Activated CD4-positive, alpha-beta T cell treated with anti-CD3 and anti-CD28 coated beads for 36 hours (primary cell): ENCODE measurements at regions of chr12 and their contacts with region 1.

Region 1: DNA sequence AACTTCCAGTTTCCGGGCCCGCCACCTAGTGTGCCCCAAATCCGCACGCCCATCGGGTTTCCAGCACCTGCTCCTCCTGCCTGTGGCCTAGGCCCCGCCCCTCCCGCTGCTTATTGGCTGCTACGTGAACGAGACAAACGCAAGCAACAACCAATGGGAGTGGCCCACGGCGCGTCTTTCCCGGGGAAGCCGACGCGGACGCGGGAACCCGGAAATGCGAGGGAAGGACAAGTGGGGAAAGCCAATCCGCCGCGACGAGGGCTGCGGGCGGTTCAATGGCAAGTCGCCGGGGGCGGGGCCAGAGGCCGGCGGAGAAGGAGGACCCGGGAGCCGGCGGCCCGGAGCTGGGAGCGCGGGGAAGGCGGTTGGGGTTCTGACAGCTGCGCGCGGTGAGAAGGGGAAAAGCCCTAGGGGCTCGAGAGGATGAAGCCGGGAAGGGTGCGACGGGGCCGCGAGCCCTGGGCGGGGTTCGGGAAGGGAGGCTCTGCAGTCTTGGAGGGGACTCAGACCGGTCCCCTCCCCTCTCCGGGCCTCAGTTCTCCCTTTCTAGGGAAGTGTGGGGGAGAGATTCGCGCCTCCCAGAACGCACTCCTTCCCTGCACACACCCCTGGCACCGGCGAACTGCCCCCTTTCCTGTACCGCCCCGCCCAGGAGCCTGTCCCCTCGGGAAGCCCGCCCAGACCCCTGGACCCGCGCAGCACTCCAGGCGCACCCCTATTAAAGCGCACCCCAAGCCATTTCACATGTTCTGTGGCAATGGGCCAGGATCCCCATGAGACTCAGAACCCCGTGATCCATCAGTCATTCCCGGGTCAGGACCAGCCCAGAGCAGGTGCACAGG is at the start of gene FICD:
- DNase-seq: peak; percentile 100
- ATAC-seq: peak; percentile 93
- H3K4me3 Mint-ChIP-seq: peak within 1 kb of the TSS; percentile 82
- H3K27ac Mint-ChIP-seq: peak within 1 kb of the TSS; percentile 83
- H3K4me1 Mint-ChIP-seq: peaks cover 26% of the 10 kb centered on the region
- H3K27me3 Mint-ChIP-seq: no peaks in the 10 kb centered on the region
- total RNA-seq, gene FICD: 3.5 to 4.5 TPM

Region 2: DNA sequence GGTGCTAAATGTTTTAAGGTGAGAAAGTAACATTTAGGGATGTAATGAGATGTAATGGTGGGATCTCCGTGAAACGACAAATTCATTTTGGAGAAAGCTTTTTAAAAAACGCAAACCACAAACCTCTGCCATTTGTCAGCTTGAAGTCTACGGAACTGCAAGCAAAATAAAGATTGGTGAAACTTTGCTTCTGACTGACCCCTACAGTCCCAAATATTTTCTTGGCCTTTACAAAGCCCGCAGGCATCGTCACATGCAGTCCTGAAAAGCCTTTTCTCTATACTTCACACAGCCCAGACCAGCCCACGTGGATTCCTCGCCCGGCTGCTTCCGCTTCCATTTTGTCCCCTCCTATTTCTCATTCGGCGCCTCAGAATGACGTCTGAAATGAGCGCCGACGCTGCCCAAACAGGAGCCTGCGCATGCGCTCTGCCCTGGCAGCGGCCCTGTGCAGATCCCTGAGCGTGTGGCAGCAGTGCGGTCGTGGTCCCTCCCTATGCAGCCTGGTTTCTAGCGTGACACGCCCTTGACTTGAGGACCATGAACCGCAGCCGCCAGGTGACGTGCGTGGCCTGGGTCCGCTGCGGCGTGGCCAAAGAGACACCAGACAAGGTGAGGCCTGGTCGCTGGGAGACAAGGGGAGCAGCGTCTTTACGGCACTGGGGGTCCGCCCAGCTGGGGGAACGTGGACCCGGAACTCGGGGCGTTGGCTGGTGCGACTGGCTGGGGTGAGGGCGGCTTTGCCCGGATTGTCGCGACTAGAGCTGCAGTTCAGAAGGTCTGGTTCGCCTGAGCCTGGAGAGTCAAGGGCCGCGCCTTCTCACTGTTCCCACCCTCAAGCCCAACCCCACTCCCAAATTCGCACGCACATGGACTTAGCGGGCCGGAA is 829.6 kb before region 1 on chr12 and contains the start of gene PWP1:
- CTCF ChIA-PET with region 1: no interaction called
- POLR2A ChIA-PET with region 1: no interaction called
- intact Hi-C with region 1: loop called (anchors 1 to 2 kb)
- DNase-seq: peak; percentile 97
- ATAC-seq: peak; percentile 92
- H3K4me3 Mint-ChIP-seq: peak within 1 kb of the TSS; percentile 94
- H3K27ac Mint-ChIP-seq: peak within 1 kb of the TSS; percentile 94
- H3K4me1 Mint-ChIP-seq: peaks cover 27% of the 10 kb centered on the region
- H3K27me3 Mint-ChIP-seq: no peaks in the 10 kb centered on the region
- total RNA-seq, gene PWP1: 59.5 to 60.0 TPM

Region 3: DNA sequence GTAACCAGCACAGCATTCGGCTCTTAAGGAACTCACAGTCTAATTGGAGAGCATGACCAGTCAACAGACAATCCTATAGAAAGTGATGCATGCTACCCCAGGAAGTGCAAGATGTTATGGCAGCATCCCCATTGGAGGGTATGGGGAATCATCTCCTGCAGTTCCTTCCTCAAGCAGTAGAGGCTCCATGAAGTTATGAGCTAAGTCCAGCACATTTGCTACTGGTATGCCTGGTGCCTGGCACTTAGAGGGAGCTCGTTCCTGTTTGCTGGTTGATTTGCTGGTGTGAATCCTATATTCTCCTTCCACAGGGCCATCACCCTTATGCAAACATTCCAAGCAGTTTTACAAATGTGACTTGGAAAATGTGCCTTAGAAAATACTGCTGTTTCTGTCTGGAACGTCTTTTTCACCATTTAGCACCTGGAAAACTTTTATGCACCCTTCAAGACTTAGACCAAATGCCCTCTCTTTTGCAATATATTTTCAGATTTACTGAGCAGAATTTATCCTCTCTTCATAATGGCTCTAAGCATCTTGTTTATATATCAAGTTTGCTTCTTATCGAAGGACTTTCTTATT is 522.2 kb before region 1 on chr12:
- CTCF ChIA-PET with region 1: interaction called, 16 read pairs
- POLR2A ChIA-PET with region 1: no interaction called
- intact Hi-C with region 1: loop called (anchors 1 to 5 kb)
- DNase-seq: peak; percentile 13
- ATAC-seq: no peak
- H3K4me3 Mint-ChIP-seq: no peak overlapping the region
- H3K27ac Mint-ChIP-seq: no peak overlapping the region
- H3K4me1 Mint-ChIP-seq: no peaks in the 10 kb centered on the region
- H3K27me3 Mint-ChIP-seq: peaks cover 28% of the 10 kb centered on the region

Region 4: DNA sequence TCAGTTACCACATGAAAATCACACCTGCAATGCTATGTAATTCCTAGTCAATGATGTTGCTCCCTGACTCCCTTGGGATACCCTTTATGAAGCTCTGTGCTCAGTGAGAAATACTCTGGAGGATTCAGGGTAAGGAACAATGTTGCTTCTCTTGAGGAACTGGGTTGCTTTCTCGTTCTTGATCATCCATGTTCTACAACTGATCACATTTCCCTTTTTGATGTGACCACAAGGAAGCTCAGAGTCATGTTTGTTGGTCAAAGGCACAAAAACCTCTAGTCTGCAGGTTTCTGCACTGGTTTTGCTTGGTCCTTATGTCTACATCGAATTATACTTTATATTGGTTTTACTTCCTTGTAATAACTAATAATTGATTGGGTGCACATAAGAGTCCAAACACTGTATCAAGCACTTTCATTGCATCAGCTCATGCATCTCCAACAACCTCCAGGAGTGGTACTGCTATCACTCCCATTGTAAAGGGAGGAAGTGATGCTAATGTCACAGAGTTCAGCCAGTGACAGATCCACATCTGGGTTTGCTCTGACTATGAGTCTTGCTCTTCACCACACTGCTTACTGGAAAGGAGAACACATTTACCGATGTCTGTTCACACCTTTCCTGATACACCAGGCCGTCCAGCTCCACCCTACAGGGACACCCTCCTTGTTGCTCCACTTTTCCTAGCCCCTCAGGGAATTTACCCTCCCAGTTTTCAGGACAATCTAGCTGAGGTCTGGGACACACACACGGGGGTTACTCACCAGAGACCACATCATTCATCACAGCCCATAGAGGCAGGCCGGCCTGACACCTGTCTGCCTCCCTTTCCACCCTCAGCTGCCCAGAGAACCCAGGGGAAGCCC is 217.1 kb before region 1 on chr12:
- CTCF ChIA-PET with region 1: no interaction called
- POLR2A ChIA-PET with region 1: no interaction called
- intact Hi-C with region 1: no loop called
- DNase-seq: no peak
- ATAC-seq: peak; percentile 80
- H3K4me3 Mint-ChIP-seq: no peak overlapping the region
- H3K27ac Mint-ChIP-seq: peak overlapping the region; percentile 26
- H3K4me1 Mint-ChIP-seq: peaks cover 16% of the 10 kb centered on the region
- H3K27me3 Mint-ChIP-seq: no peaks in the 10 kb centered on the region

Region 5: DNA sequence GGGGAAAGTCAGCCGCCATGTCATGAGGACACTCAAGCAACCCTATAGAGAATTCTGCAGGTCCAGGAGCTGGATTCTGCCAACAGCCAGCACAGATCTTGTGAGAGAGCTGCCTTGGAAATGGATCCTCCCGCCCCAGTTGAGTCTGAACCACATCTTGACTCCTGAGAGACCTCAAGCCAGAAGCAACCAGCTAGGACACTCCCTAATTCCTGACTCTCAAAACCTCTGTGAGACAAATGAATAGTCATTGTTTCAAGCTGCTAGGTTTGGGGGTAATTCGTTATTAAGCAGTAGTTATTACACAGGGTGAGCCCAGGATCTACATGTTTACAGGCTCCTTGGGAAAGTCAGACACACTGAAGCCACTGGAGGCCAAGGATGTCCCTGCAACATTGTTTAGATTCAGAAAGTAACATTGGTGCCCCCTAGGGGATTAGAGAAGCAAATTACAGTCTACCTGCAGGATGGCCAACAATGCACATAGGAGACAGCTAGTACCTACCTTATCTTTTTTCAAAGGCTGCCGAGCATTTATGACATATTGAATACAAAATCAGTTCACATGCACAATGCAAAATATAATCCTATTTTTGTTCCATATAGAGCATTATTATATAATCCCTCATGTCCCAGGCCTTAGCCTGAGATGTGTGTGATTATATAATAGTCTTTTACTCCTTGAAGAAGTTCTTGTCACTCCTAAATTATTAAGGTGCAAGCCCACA is 58.0 kb before region 1 on chr12:
- CTCF ChIA-PET with region 1: no interaction called
- POLR2A ChIA-PET with region 1: no interaction called
- intact Hi-C with region 1: loop called in 1 of 2 experiments (anchors 5 kb)
- DNase-seq: peak; percentile 15
- ATAC-seq: no peak
- H3K4me3 Mint-ChIP-seq: no peak overlapping the region
- H3K27ac Mint-ChIP-seq: no peak overlapping the region
- H3K4me1 Mint-ChIP-seq: no peaks in the 10 kb centered on the region
- H3K27me3 Mint-ChIP-seq: peaks cover 15% of the 10 kb centered on the region

Region 6: DNA sequence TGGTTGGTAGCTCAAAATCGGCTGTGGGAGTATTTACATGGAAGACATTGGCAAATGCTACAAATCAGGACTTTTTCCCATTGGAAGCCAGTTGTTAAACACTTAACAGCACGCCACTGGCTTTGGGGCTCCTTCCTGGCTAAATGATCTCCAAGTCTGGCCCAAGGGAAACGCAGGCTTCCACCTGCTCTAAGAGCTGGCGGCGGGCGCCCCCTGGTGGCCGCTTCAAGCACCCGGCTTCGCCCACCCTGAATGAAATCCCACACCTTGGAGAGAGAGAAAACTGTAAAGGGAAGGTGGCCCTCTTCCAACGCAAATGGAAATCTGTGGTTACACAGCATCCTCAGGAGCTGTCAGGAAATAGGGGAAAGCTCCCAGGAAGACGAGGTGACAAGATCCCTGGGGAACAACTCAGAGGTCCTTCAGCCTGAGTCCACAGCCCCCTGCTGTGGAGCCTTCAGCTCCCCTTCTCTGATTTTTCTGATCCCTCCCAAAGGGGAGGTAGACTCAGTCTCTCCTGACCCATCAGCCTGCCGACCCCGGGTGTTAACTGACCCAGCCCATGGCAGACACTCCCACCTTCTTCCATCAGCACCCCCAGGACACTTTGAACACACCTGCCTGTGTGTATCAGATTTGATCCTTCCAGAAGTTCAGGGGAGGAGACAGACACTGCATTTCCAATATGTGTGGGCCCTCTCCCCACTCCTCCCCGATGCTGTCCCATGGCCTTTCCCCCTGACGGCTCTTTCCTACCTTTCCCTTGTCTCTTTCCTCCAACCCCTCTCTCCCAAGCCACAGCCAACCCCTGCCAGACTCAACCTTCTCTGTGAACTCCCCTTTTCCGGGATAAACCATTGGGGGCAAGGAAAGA is 103.1 kb after region 1 on chr12:
- CTCF ChIA-PET with region 1: interaction called, 4 read pairs
- POLR2A ChIA-PET with region 1: no interaction called
- intact Hi-C with region 1: loop called (anchors 1 kb)
- DNase-seq: peak; percentile 88
- ATAC-seq: peak; percentile 46
- H3K4me3 Mint-ChIP-seq: no peak overlapping the region
- H3K27ac Mint-ChIP-seq: peak overlapping the region; percentile 62
- H3K4me1 Mint-ChIP-seq: peaks cover 40% of the 10 kb centered on the region
- H3K27me3 Mint-ChIP-seq: no peaks in the 10 kb centered on the region

Region 7: GRCh38 chr12:108815875-108816594 is 300.8 kb after region 1 on chr12:
- CTCF ChIA-PET with region 1: no interaction called
- POLR2A ChIA-PET with region 1: no interaction called
- intact Hi-C with region 1: no loop called
- DNase-seq: no peak
- ATAC-seq: no peak
- H3K4me3 Mint-ChIP-seq: no peak overlapping the region
- H3K27ac Mint-ChIP-seq: peak overlapping the region; percentile 58
- H3K4me1 Mint-ChIP-seq: peaks cover 4% of the 10 kb centered on the region
- H3K27me3 Mint-ChIP-seq: no peaks in the 10 kb centered on the region

Region 8: GRCh38 chr12:108856428-108857157 is 341.4 kb after region 1 on chr12:
- CTCF ChIA-PET with region 1: no interaction called
- POLR2A ChIA-PET with region 1: no interaction called
- intact Hi-C with region 1: loop called in 1 of 2 experiments (anchors 1 kb)
- DNase-seq: peak; percentile 81
- ATAC-seq: peak; percentile 64
- H3K4me3 Mint-ChIP-seq: peak overlapping the region; percentile 82
- H3K27ac Mint-ChIP-seq: peak overlapping the region; percentile 86
- H3K4me1 Mint-ChIP-seq: peaks cover 43% of the 10 kb centered on the region
- H3K27me3 Mint-ChIP-seq: peaks cover 2% of the 10 kb centered on the region

Region 9: DNA sequence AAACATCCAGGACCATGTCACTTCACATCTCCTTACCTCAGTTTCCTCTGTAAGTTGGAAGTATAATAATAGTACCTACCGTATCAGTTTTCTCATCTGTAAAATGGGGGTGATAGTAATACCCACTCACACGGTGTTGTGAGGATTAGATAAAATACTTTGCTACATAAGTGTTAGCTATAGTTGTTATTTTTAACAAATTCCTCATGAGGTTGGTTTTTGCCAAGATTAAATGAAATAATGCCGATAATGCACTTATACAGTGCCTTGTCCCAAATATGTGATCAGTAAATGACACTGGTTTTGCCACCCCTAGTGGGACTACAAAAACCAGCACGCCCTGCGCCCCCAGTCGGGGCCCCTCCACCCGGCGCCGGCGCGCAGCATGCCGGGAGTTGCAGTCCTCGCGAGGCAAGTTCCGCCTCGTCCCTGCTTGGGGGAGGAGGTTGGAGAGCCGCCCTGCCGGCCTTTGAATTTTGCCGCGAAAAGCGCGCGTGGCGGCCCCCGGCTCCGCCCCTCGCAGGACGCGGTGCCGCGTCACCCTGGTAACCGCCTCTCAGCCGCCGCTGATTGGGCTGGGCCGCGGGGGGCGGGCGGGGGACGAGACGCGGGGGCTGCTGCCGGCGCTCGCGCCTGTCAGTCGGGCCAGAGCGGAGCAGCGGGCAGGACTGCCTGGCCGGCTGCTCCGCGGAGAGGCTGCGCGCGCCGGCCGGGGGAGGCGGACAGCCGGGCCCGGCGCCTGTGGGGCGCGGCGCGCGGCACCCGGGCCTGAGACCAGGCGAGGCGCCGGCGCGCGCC is 1198.2 kb after region 1 on chr12 and contains the start of gene FAM222A:
- CTCF ChIA-PET with region 1: no interaction called
- POLR2A ChIA-PET with region 1: no interaction called
- intact Hi-C with region 1: loop called in 1 of 2 experiments (anchors 5 kb)
- DNase-seq: peak; percentile 97
- ATAC-seq: peak; percentile 95
- H3K4me3 Mint-ChIP-seq: peak within 1 kb of the TSS; percentile 56
- H3K27ac Mint-ChIP-seq: no peak within 1 kb of the TSS
- H3K4me1 Mint-ChIP-seq: peaks cover 4% of the 10 kb centered on the region
- H3K27me3 Mint-ChIP-seq: peaks cover 25% of the 10 kb centered on the region
- total RNA-seq, gene FAM222A: 0.39 to 0.53 TPM